Motor neuron (in vitro differentiated cells): ENCODE measurements at regions of chr1 and their contacts with region 1.

Region 1: DNA sequence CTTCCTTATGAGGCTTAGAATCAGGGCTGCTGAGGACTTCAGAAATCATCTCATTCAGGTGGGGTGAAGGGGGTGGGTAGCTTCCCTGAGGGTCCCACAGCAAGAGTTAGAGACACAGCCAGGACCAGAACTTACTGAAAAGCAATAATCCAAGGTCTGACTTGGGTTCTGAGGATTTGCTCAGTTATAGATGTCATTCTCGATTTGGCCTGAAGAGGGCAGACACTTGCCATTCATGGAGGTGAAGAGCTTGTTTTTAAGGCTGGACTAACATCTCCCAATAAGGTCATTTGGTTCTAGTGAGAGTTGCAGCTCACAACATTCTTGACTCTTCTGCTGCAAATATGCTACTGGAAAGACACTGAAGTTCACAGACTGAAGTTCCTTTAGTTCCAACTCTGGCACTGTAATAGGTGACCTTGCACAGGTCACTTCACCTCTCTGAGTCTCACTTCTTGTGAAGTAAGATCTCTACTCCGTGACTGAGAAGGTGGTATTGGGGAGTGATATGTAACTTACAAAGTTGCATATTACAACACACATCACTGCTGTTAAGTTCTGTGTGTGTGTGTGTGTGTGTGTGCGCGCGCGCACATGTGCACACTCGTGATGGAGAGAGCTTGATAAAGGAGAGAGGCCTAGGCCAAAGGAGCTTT is 69.8 kb upstream of the DIRAS3 start:
- ATAC-seq: peak; percentile 74 to 86 (median 78)
- H3K4me3 ChIP-seq: no peak overlapping the region
- H3K27ac ChIP-seq: no peak overlapping the region
- H3K4me1 ChIP-seq: no peaks in the 10 kb centered on the region

Region 2: DNA sequence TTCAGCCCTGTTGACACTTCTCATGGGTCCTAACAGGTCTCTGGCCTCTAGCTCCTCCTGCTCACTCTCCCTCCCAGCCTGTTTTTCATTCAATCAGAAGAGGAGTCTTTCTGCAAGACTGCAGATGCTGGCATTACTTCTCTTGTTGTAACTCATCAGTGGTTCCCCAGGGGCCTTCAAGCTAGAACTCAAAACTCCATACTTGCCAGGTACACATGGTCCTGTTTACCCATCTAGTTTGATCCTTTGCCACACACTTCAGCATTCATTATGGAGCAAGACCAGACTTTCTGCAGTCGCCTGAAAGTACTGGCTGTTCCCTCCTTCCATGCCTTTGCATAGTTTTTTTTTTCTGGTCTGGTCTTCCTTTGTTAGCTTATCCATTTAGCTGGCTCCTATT is 738.0 kb before region 1 on chr1:
- in situ Hi-C with region 1: no loop called
- ATAC-seq: no peak
- H3K4me3 ChIP-seq: no peak overlapping the region
- H3K27ac ChIP-seq: no peak overlapping the region
- H3K4me1 ChIP-seq: no peaks in the 10 kb centered on the region

Region 3: DNA sequence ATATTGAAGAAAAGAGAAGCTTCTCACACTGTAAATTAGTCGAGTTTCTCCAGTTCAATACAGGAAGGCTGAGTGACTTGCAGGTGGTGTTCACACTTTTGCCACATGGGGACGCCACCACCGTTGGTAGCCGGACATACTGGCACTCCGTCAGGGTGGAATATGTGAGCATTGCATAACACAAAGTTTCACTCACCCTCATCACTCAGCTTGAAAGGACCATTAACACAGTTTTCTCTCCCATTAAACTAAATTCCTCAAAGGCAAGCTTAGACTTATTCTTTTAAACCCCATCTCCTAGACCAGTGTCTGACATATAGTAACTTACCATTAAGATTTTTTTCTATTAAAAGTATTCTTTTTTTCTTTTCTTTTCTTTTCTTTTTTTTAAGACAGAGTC is 584.8 kb before region 1 on chr1:
- in situ Hi-C with region 1: loop called in 3 of 9 experiments (anchors 25 kb)
- ATAC-seq: peak; percentile 61 to 92 (median 76)
- H3K4me3 ChIP-seq: no peak overlapping the region
- H3K27ac ChIP-seq: no peak overlapping the region
- H3K4me1 ChIP-seq: peaks cover 0 to 5% of the 10 kb centered on the region in 2 donors

Region 4: GRCh38 chr1:67832737-67833601 is 287.3 kb before region 1 on chr1 and contains the start of gene GNG12:
- in situ Hi-C with region 1: loop called in 1 of 9 experiments (anchors 25 kb)
- ATAC-seq: peak; percentile 63 to 80 (median 74)
- H3K4me3 ChIP-seq: peak within 1 kb of the TSS; percentile 35 to 58 (median 53)
- H3K27ac ChIP-seq: no peak within 1 kb of the TSS
- H3K4me1 ChIP-seq: peaks cover 0 to 3% of the 10 kb centered on the region in 2 donors
- total RNA-seq, gene GNG12: 8.6 to 146 (median 51.7) TPM

Region 5: DNA sequence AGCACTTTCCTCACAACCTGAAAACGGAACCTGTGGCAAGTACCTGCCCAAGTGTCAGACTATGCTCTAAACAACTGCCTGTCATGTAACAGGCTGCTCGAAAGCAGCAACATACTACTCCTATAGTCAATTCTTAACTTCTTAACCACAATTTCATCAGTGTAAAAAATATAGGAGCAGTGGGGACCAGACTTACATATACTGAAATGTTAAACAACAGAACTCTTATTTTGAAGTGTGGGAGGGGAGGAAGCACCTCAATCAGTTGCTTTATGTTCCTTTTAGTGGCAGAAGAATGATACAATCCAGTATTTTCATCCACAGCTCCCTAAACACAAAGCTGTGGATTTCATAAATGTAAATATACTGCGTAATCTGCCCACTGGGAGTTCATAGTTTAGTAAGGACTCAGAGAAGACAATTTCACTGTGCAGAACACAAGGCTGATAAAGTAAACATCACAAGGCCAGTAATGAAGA is 67.8 kb after region 1 on chr1:
- in situ Hi-C with region 1: no loop called
- ATAC-seq: no peak
- H3K4me3 ChIP-seq: no peak overlapping the region
- H3K27ac ChIP-seq: no peak overlapping the region
- H3K4me1 ChIP-seq: no peaks in the 10 kb centered on the region

Region 6: GRCh38 chr1:68321084-68321685 is 200.9 kb after region 1 on chr1:
- in situ Hi-C with region 1: loop called in 5 of 9 experiments (anchors 5 to 25 kb)
- ATAC-seq: peak; percentile 73 to 99 (median 88)
- H3K4me3 ChIP-seq: no peak overlapping the region
- H3K27ac ChIP-seq: no peak overlapping the region
- H3K4me1 ChIP-seq: peaks cover 0 to 5% of the 10 kb centered on the region in 2 donors

Region 7: GRCh38 chr1:68346188-68346808 is 226.0 kb after region 1 on chr1:
- in situ Hi-C with region 1: loop called in 4 of 9 experiments (anchors 10 to 25 kb)
- ATAC-seq: peak in 1 of 8 experiments; percentile 27
- H3K4me3 ChIP-seq: no peak overlapping the region
- H3K27ac ChIP-seq: no peak overlapping the region
- H3K4me1 ChIP-seq: no peaks in the 10 kb centered on the region